ENCODE measurements at regions of chr16 and their contacts with region 1.

Region 1: GRCh38 chr16:30844671-30845449 is 49.0 kb downstream of the BCL7C start:
- DNase-seq: peak; percentile 35 to 68
- ATAC-seq: peak; percentile 82 to 97 (median 85)
- H3K4me3 ChIP-seq: peak overlapping the region; percentile 53
- H3K27ac ChIP-seq: peak overlapping the region; percentile 58
- H3K4me1 ChIP-seq: peaks cover 10% of the 10 kb centered on the region
- H3K27me3 ChIP-seq: no peaks in the 10 kb centered on the region
- CTCF ChIP-seq: peak; percentile 85

Region 2: GRCh38 chr16:30874821-30875717 is 30.2 kb after region 1 on chr16:
- intact Hi-C with region 1: loop called in 1 of 2 experiments (anchors 5 kb)
- DNase-seq: peak; percentile 93 to 96
- ATAC-seq: peak; percentile 98 to 99 (median 98)
- H3K4me3 ChIP-seq: peak overlapping the region; percentile 94
- H3K27ac ChIP-seq: peak overlapping the region; percentile 90
- H3K4me1 ChIP-seq: peaks cover 14% of the 10 kb centered on the region
- H3K27me3 ChIP-seq: no peaks in the 10 kb centered on the region
- CTCF ChIP-seq: no peak

Region 3: DNA sequence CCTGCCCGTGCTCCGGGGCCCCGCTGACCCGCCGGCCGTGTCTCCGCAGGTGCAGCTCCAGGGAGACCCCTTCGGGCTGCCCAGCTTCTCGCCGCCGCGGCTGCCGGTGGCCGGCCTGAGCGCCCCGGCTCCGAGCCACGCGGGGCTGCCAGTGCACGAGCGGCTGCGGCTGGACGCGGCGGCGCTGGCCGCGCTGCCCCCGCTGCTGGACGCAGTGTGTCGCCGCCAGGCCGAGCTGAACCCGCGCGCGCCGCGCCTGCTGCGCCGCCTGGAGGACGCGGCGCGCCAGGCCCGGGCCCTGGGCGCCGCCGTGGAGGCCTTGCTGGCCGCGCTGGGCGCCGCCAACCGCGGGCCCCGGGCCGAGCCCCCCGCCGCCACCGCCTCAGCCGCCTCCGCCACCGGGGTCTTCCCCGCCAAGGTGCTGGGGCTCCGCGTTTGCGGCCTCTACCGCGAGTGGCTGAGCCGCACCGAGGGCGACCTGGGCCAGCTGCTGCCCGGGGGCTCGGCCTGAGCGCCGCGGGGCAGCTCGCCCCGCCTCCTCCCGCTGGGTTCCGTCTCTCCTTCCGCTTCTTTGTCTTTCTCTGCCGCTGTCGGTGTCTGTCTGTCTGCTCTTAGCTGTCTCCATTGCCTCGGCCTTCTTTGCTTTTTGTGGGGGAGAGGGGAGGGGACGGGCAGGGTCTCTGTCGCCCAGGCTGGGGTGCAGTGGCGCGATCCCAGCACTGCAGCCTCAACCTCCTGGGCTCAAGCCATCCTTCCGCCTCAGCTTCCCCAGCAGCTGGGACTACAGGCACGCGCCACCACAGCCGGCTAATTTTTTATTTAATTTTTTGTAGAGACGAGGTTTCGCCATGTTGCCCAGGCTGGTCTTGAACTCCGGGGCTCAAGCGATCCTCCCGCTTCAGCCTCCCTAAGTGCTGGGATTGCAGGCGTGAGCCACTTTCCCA is 57.4 kb after region 1 on chr16:
- intact Hi-C with region 1: loop called (anchors 2 kb)
- DNase-seq: peak; percentile 74 to 87
- ATAC-seq: peak; percentile 85 to 91 (median 86)
- H3K4me3 ChIP-seq: peak overlapping the region; percentile 65
- H3K27ac ChIP-seq: peak overlapping the region; percentile 88
- H3K4me1 ChIP-seq: peaks cover 12% of the 10 kb centered on the region
- H3K27me3 ChIP-seq: no peaks in the 10 kb centered on the region
- CTCF ChIP-seq: peak; percentile 63

Region 4: DNA sequence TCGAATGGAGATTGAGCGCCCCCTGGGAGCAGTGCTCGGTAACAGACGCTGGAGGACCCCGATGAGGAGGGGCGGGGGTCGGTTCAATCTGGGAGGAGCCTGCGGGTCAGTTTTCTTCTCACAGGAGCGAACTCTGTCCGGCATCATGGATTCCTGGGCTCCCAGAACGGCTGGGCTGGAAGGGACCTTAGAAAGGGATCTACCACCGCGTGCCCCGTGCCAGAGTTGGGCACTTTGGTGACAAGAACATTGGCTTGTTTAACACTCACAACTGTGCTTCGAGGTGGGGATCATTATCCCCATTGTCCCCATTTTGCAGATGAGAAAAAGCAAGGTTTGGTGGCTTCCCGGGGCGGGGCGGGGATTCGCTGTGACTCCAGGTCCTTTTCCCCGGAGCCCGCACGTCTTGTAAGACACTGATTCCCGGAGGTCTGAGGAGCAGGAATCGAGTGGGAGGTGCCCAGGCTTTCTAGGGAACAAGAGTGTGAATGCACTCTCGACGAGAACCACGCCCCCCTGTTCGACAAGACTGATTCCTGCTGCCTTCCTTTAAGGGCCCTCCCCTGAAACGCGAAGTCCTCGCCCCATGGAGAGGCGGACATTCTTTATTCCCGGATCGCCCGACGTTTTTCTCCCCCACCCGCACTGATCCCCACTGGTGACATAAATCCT is 77.0 kb after region 1 on chr16:
- intact Hi-C with region 1: loop called (anchors 1 kb)
- DNase-seq: peak; percentile 86 to 91
- ATAC-seq: peak; percentile 14 to 44 (median 21)
- H3K4me3 ChIP-seq: peak overlapping the region; percentile 81
- H3K27ac ChIP-seq: peak overlapping the region; percentile 86
- H3K4me1 ChIP-seq: peaks cover 7% of the 10 kb centered on the region
- H3K27me3 ChIP-seq: no peaks in the 10 kb centered on the region
- CTCF ChIP-seq: peak; percentile 84